ENCODE measurements at regions of chr5 and their contacts with region 1.

Region 1: DNA sequence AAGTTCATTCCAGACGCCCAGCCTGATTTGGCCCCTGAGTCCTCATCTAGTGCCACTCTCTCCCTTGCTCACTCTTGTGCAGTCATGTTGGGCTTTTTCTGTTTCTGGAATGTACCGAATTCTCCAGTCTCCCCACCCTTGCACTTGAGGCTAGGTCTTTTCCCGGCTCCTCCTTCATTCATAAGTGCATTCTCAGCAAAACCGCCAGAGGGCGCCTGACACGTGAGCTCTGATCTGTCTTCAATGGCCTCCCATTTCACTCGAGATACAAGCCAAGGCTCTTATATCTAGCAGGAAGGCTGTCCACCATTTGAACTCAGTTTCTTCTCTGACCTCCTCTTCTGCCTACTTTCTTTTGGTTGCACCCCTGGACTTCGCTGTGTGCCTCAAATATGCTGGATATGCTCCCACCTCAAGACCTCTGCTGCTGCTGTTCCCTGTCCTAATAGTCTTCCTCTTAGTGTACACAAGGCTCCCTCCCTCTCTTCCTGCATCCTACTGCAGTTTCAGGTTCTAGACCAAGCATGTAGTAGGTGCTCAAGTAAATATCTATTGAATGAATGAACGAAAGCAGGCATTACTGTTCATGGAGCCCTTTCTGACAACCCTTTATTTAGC is 568.1 kb upstream of the WWC1 start:
- DNase-seq: peak; percentile 80
- H3K4me3 ChIP-seq: no peak overlapping the region
- H3K27ac ChIP-seq: peak overlapping the region; percentile 74
- H3K4me1 ChIP-seq: peaks cover 8% of the 10 kb centered on the region
- H3K27me3 ChIP-seq: no peaks in the 10 kb centered on the region
- CTCF ChIP-seq: peak; percentile 84 to 91

Region 2: DNA sequence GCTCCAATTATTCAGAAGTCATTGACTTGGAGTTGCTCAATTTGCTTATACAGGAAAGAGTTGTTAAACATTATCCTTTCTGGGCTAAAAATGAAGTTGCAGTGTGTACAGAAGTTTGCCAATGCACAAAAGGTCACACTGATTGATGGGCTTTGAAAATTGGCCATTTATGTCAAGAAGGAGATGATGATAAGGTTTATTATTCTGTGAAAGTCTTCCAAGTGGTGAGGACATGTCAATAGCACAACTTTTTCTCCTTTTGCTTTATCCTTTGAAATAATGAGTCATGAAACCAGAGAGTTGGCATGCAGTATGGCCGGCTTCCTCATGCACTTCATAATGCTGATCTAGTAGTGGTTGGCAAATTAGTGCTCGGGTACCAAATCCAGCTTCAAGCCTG is 280.4 kb before region 1 on chr5:
- CTCF ChIA-PET with region 1: no interaction called
- dilution Hi-C with region 1: no loop called
- in situ Hi-C with region 1: no loop called
- intact Hi-C with region 1: no loop called
- DNase-seq: no peak
- H3K4me3 ChIP-seq: no peak overlapping the region
- H3K27ac ChIP-seq: no peak overlapping the region
- H3K4me1 ChIP-seq: no peaks in the 10 kb centered on the region
- H3K27me3 ChIP-seq: no peaks in the 10 kb centered on the region
- CTCF ChIP-seq: no peak

Region 3: GRCh38 chr5:167642779-167643517 is 80.4 kb before region 1 on chr5:
- CTCF ChIA-PET with region 1: no interaction called
- dilution Hi-C with region 1: no loop called
- in situ Hi-C with region 1: no loop called
- intact Hi-C with region 1: loop called (anchors 1 kb)
- DNase-seq: peak; percentile 83
- H3K4me3 ChIP-seq: peak overlapping the region in 1 of 3 experiments; percentile 9
- H3K27ac ChIP-seq: peak overlapping the region; percentile 91
- H3K4me1 ChIP-seq: peaks cover 43% of the 10 kb centered on the region
- H3K27me3 ChIP-seq: no peaks in the 10 kb centered on the region
- CTCF ChIP-seq: no peak

Region 4: GRCh38 chr5:167754501-167755021 is 31.2 kb after region 1 on chr5:
- CTCF ChIA-PET with region 1: no interaction called
- dilution Hi-C with region 1: no loop called
- in situ Hi-C with region 1: no loop called
- intact Hi-C with region 1: loop called (anchors 1 kb)
- DNase-seq: no peak
- H3K4me3 ChIP-seq: no peak overlapping the region
- H3K27ac ChIP-seq: no peak overlapping the region
- H3K4me1 ChIP-seq: peaks cover 15% of the 10 kb centered on the region
- H3K27me3 ChIP-seq: no peaks in the 10 kb centered on the region
- CTCF ChIP-seq: no peak

Region 5: GRCh38 chr5:167945542-167946384 is 222.4 kb after region 1 on chr5:
- CTCF ChIA-PET with region 1: no interaction called
- dilution Hi-C with region 1: no loop called
- in situ Hi-C with region 1: loop called in 1 of 2 experiments (anchors 10 kb)
- intact Hi-C with region 1: loop called (anchors 10 kb)
- DNase-seq: peak; percentile 78
- H3K4me3 ChIP-seq: no peak overlapping the region
- H3K27ac ChIP-seq: peak overlapping the region; percentile 80
- H3K4me1 ChIP-seq: peaks cover 66% of the 10 kb centered on the region
- H3K27me3 ChIP-seq: no peaks in the 10 kb centered on the region
- CTCF ChIP-seq: no peak

Region 6: DNA sequence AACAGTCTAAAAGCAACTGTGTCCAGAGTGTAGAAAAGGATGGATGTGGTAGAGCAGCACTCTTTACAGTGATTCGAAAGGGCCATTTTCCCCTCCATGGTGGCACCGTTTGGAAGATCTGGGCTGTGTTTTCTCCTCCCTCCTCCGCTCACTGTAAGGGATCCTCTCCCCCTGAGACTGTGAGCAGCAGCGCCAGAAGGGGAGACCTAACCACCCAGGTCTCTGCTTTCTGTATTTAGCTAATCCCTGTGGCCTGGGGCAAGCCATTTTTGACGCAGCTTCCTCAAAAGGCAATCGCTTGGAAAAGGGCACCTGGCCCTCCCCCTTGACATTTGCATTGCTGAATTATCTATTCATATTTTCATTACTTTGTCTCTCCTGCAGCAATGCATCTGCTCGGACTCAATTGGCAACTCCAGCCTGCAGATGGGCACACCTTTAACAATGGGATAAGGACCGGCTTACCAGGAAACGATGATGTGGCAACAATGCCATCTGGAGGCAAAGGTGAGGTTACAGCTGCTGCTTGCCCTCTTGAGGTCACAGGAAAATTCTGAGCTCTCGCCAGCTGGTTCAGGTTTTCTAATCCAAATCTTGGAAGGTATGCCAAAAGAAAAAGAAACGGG is 323.8 kb after region 1 on chr5:
- CTCF ChIA-PET with region 1: interaction called, 3 read pairs
- dilution Hi-C with region 1: no loop called
- in situ Hi-C with region 1: no loop called
- intact Hi-C with region 1: loop called (anchors 1 kb)
- DNase-seq: peak; percentile 50
- H3K4me3 ChIP-seq: no peak overlapping the region
- H3K27ac ChIP-seq: no peak overlapping the region
- H3K4me1 ChIP-seq: no peaks in the 10 kb centered on the region
- H3K27me3 ChIP-seq: no peaks in the 10 kb centered on the region
- CTCF ChIP-seq: peak; percentile 59 to 66